ENCODE measurements at regions of chr7 and their contacts with region 1.

Region 1: GRCh38 chr7:74206589-74207120 is 3.2 kb upstream of the LAT2 start:
- DNase-seq: no peak
- ATAC-seq: peak; percentile 35
- H3K4me3 ChIP-seq: peak overlapping the region; percentile 44; the same call in 1 of the 2 replicates
- H3K27ac ChIP-seq: 0 out of 2 replicates have a peak overlapping the region, but pooled peaks have one; percentile 7
- H3K4me1 ChIP-seq: peaks cover 36% of the 10 kb centered on the region
- H3K27me3 ChIP-seq: no peaks in the 10 kb centered on the region
- CTCF ChIP-seq: peak; percentile 93 to 95 (median 93)
- EP300 ChIP-seq: no peak
- POLR2A ChIP-seq: no peak
- RAD21 ChIP-seq: peak; percentile 86

Region 2: DNA sequence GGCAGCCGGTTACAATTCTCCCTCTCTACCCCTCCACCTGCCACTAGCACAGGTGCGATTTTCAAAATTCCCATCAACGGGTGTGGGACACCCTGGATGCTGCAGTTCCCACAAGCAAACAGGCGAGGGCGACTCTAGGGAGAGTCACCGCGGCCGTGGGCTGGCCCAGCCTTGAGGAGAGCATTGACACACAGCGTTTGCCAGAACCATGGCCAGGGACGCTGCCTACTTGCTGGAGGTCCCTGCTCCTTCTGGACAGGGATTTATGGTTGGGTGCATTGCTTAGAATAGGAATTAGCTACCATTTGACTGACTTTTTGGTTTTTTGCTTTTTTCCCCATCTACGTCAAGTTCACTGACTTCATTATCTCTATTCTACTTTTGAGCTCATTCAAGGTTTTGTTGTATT is 394.9 kb before region 1 on chr7:
- CTCF ChIA-PET with region 1: no interaction called
- POLR2A ChIA-PET with region 1: no interaction called
- RAD21 ChIA-PET with region 1: no interaction called
- SMC1A ChIA-PET with region 1: no interaction called
- in situ Hi-C with region 1: no loop called
- intact Hi-C with region 1: no loop called
- DNase-seq: no peak
- ATAC-seq: peak; percentile 91
- H3K4me3 ChIP-seq: no peak overlapping the region
- H3K27ac ChIP-seq: no peak overlapping the region
- H3K4me1 ChIP-seq: no peaks in the 10 kb centered on the region
- H3K27me3 ChIP-seq: no peaks in the 10 kb centered on the region
- CTCF ChIP-seq: peak; percentile 64 to 87 (median 83)
- EP300 ChIP-seq: no peak
- POLR2A ChIP-seq: no peak
- RAD21 ChIP-seq: peak; percentile 67

Region 3: DNA sequence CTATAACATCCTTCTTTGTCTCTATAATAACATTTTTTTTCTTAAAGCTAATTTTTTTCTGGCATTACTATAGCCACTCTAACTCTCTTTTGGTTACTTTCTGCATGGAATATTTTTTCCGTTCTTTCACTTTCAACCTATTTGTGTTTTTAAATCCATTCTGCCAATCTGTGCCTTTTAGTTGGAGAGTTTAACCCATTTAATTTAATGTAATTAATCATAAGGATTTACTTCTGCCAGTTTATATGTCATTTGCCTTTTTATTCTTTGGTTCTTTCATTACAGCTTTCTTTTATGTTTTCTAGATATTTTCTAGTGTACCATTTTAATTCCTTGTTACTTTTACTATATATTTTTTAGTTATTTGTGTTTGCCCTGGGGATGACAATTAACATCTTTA is 267.1 kb before region 1 on chr7:
- CTCF ChIA-PET with region 1: no interaction called
- POLR2A ChIA-PET with region 1: no interaction called
- RAD21 ChIA-PET with region 1: no interaction called
- SMC1A ChIA-PET with region 1: no interaction called
- in situ Hi-C with region 1: no loop called
- intact Hi-C with region 1: no loop called
- DNase-seq: no peak
- ATAC-seq: no peak
- H3K4me3 ChIP-seq: no peak overlapping the region
- H3K27ac ChIP-seq: no peak overlapping the region
- H3K4me1 ChIP-seq: no peaks in the 10 kb centered on the region
- H3K27me3 ChIP-seq: no peaks in the 10 kb centered on the region
- CTCF ChIP-seq: no peak
- EP300 ChIP-seq: no peak
- POLR2A ChIP-seq: no peak
- RAD21 ChIP-seq: no peak

Region 4: DNA sequence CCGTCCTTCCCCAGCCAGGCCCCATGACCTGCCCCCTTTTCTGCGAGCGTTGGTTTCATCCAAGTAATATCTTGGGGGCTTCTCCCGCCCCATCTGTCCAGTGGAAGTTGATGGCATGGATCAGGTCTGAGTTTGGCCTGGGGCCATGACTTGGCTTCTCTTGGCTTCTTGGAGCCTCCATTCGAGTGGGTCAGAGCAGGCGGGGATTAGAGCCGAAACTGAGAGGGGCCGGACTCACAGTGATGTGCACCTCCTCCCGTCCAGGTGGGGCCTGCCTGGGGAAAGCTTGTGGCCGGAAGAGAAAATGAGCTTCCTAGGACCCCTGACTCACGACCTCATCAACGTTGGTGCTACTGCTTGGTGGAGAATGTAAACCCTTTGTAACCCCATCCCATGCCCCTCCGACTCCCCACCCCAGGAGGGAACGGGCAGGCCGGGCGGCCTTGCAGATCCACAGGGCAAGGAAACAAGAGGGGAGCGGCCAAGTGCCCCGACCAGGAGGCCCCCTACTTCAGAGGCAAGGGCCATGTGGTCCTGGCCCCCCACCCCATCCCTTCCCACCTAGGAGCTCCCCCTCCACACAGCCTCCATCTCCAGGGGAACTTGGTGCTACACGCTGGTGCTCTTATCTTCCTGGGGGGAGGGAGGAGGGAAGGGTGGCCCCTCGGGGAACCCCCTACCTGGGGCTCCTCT is 138.1 kb before region 1 on chr7:
- CTCF ChIA-PET with region 1: interaction called, 58 read pairs
- POLR2A ChIA-PET with region 1: no interaction called
- RAD21 ChIA-PET with region 1: interaction called, 5 read pairs
- SMC1A ChIA-PET with region 1: interaction called, 6 read pairs
- in situ Hi-C with region 1: no loop called
- intact Hi-C with region 1: loop called (anchors 1 kb)
- DNase-seq: no peak
- ATAC-seq: no peak
- H3K4me3 ChIP-seq: no peak overlapping the region
- H3K27ac ChIP-seq: no peak overlapping the region
- H3K4me1 ChIP-seq: no peaks in the 10 kb centered on the region
- H3K27me3 ChIP-seq: no peaks in the 10 kb centered on the region
- CTCF ChIP-seq: no peak
- EP300 ChIP-seq: no peak
- POLR2A ChIP-seq: no peak
- RAD21 ChIP-seq: no peak

Region 5: DNA sequence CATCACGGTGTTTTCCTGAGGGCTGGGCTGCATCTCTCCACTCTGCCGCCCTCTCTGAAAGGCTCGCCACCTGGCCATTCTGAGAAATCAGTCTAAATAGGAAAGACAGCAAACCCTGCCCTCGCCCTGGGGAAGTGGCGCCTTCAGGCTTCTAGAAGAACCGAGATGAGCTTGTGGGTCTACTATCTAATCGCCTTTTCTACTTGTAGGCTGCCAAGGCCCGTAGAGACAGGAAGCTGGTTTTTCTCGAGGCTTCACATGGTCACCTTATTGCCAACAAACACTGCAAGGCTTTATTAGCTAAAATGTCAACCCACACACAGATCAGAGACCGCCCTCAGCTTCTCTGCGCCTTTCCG is 24.6 kb after region 1 on chr7:
- CTCF ChIA-PET with region 1: interaction called, 34 read pairs
- POLR2A ChIA-PET with region 1: interaction called, 35 read pairs
- RAD21 ChIA-PET with region 1: interaction called, 36 read pairs
- SMC1A ChIA-PET with region 1: interaction called, 30 read pairs
- in situ Hi-C with region 1: no loop called
- intact Hi-C with region 1: no loop called
- DNase-seq: peak; percentile 78
- ATAC-seq: peak; percentile 88
- H3K4me3 ChIP-seq: no peak overlapping the region
- H3K27ac ChIP-seq: peak overlapping the region; percentile 77
- H3K4me1 ChIP-seq: peaks cover 42% of the 10 kb centered on the region
- H3K27me3 ChIP-seq: no peaks in the 10 kb centered on the region
- CTCF ChIP-seq: no peak
- EP300 ChIP-seq: no peak
- POLR2A ChIP-seq: peak; percentile 35
- RAD21 ChIP-seq: no peak; the same call in 1 of the 2 replicates

Region 6: GRCh38 chr7:74263399-74264120 is 56.9 kb after region 1 on chr7:
- CTCF ChIA-PET with region 1: interaction called, 29 read pairs
- POLR2A ChIA-PET with region 1: interaction called, 39 read pairs
- RAD21 ChIA-PET with region 1: interaction called, 15 read pairs
- SMC1A ChIA-PET with region 1: interaction called, 3 read pairs
- in situ Hi-C with region 1: no loop called
- intact Hi-C with region 1: loop called (anchors 2 kb)
- DNase-seq: no peak
- ATAC-seq: no peak
- H3K4me3 ChIP-seq: no peak overlapping the region
- H3K27ac ChIP-seq: no peak overlapping the region
- H3K4me1 ChIP-seq: peaks cover 33% of the 10 kb centered on the region
- H3K27me3 ChIP-seq: no peaks in the 10 kb centered on the region
- CTCF ChIP-seq: no peak
- EP300 ChIP-seq: no peak
- POLR2A ChIP-seq: no peak
- RAD21 ChIP-seq: no peak

Region 7: GRCh38 chr7:74289018-74289658 is 82.5 kb after region 1 on chr7 and contains the start of gene CLIP2:
- CTCF ChIA-PET with region 1: interaction called, 93 read pairs
- POLR2A ChIA-PET with region 1: interaction called, 21 read pairs
- RAD21 ChIA-PET with region 1: interaction called, 41 read pairs
- SMC1A ChIA-PET with region 1: interaction called, 21 read pairs
- in situ Hi-C with region 1: loop called (anchors 5 kb)
- intact Hi-C with region 1: loop called (anchors 5 kb)
- DNase-seq: no peak
- ATAC-seq: peak; percentile 49
- H3K4me3 ChIP-seq: peak within 1 kb of the TSS; percentile 97
- H3K27ac ChIP-seq: peak within 1 kb of the TSS; percentile 93
- H3K4me1 ChIP-seq: peaks cover 44% of the 10 kb centered on the region
- H3K27me3 ChIP-seq: no peaks in the 10 kb centered on the region
- CTCF ChIP-seq: no peak
- EP300 ChIP-seq: no peak
- POLR2A ChIP-seq: peak; percentile 75
- RAD21 ChIP-seq: 0 out of 2 replicates have a peak, but pooled peaks have one; percentile 5
- polyA plus RNA-seq, gene CLIP2: 0.26 to 0.82 TPM

Region 8: DNA sequence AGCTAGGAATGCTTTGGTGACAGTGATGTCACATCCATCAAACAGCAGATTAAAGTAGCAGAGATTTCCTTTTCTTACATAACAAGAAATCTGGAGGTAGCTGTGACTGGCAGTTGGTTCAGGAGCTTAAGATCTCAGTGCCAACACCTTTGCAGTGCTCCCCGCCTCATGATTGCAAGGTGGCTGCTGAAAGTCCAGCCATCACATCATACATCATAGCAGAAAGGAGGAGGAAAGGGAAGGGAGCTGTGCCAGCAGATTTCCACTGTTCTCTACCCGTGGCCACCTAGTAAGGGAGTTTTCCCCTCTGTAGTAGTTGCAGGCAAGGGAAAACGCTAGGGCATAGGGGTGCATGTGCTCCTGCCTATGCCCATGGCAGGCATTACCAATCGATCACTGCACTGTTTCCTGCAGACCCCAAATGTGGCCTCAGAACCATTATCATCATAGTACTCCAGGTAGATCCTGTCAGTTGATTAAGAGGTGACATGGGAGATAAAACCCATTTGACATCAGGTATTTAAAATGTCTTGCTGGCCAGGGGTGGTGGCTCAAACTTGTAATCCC is 189.2 kb after region 1 on chr7:
- CTCF ChIA-PET with region 1: interaction called, 190 read pairs
- POLR2A ChIA-PET with region 1: interaction called, 4 read pairs
- RAD21 ChIA-PET with region 1: interaction called, 127 read pairs
- SMC1A ChIA-PET with region 1: interaction called, 86 read pairs
- in situ Hi-C with region 1: loop called (anchors 5 kb)
- intact Hi-C with region 1: loop called (anchors 1 kb)
- DNase-seq: no peak
- ATAC-seq: no peak
- H3K4me3 ChIP-seq: no peak overlapping the region
- H3K27ac ChIP-seq: no peak overlapping the region
- H3K4me1 ChIP-seq: no peaks in the 10 kb centered on the region
- H3K27me3 ChIP-seq: no peaks in the 10 kb centered on the region
- CTCF ChIP-seq: no peak
- EP300 ChIP-seq: no peak
- POLR2A ChIP-seq: no peak
- RAD21 ChIP-seq: no peak

Measured in GM12878 (cell line).